Right cardiac atrium (tissue), 5 donors: ENCODE measurements at regions of chr5 and their contacts with region 1.

Region 1: GRCh38 chr5:151523335-151523734 is 67.8 kb downstream of the FAT2 start:
- DNase-seq: no peak
- ATAC-seq: peak; percentile 42 to 43
- H3K4me3 ChIP-seq: no peak overlapping the region
- H3K27ac ChIP-seq: no peak overlapping the region
- H3K4me1 ChIP-seq: no peaks in the 10 kb centered on the region
- H3K27me3 ChIP-seq: no peaks in the 10 kb centered on the region

Region 2: GRCh38 chr5:151651997-151652645 is 128.8 kb after region 1 on chr5:
- intact Hi-C with region 1: loop called (anchors 5 kb)
- DNase-seq: peak; percentile 78 to 91 (median 89)
- ATAC-seq: peak; percentile 94 to 95
- H3K4me3 ChIP-seq: no peak overlapping the region
- H3K27ac ChIP-seq: no peak overlapping the region
- H3K4me1 ChIP-seq: no peaks in the 10 kb centered on the region
- H3K27me3 ChIP-seq: no peaks in the 10 kb centered on the region